Heart left ventricle (tissue), 16 donors: ENCODE measurements at regions of chr19 and their contacts with region 1.

Region 1: GRCh38 chr19:3665681-3666544 is 34.4 kb downstream of the PIP5K1C start:
- DNase-seq: peak; percentile 65 to 89 (median 69)
- ATAC-seq: peak in 3 of 4 donors; percentile 29 to 58 (median 38)
- H3K4me3 ChIP-seq: no peak overlapping the region
- H3K27ac ChIP-seq: peak overlapping the region in 3 of 12 donors; percentile 1 to 51 (median 42)
- H3K4me1 ChIP-seq: peaks cover 0 to 54% (median 36%) of the 10 kb centered on the region in 12 donors
- H3K27me3 ChIP-seq: no peaks in the 10 kb centered on the region
- CTCF ChIP-seq: peak; percentile 82 to 98 (median 96)
- POLR2A ChIP-seq: no peak

Region 2: GRCh38 chr19:3700221-3701032 is 34.5 kb after region 1 on chr19 and contains the start of gene PIP5K1C:
- intact Hi-C with region 1: loop called (anchors 1 to 2 kb)
- DNase-seq: peak; percentile 88 to 95 (median 92)
- ATAC-seq: peak; percentile 48 to 94 (median 89)
- H3K4me3 ChIP-seq: peak within 1 kb of the TSS; percentile 69 to 100 (median 90)
- H3K27ac ChIP-seq: peak within 1 kb of the TSS; percentile 62 to 97 (median 90)
- H3K4me1 ChIP-seq: peaks cover 0 to 30% (median 12%) of the 10 kb centered on the region in 12 donors
- H3K27me3 ChIP-seq: no peaks in the 10 kb centered on the region
- CTCF ChIP-seq: peak; percentile 63 to 91 (median 78)
- POLR2A ChIP-seq: peak in 1 of 2 donors; percentile 41
- total RNA-seq, gene PIP5K1C: 27.8 to 56.6 (median 38.2) TPM

Region 3: GRCh38 chr19:3798137-3798536 is 132.2 kb after region 1 on chr19:
- intact Hi-C with region 1: no loop called
- DNase-seq: no peak
- ATAC-seq: no peak
- H3K4me3 ChIP-seq: no peak overlapping the region
- H3K27ac ChIP-seq: no peak overlapping the region
- H3K4me1 ChIP-seq: peaks cover 0 to 14% (median 7%) of the 10 kb centered on the region in 12 donors
- H3K27me3 ChIP-seq: peaks cover 0 to 46% (median 24%) of the 10 kb centered on the region in 9 donors
- CTCF ChIP-seq: no peak
- POLR2A ChIP-seq: no peak

Region 4: GRCh38 chr19:3821857-3822364 is 156.0 kb after region 1 on chr19:
- intact Hi-C with region 1: loop called in 2 of 10 experiments (anchors 10 kb)
- DNase-seq: peak; percentile 44 to 89 (median 62)
- ATAC-seq: peak in 3 of 4 donors; percentile 61 to 85 (median 80)
- H3K4me3 ChIP-seq: no peak overlapping the region
- H3K27ac ChIP-seq: no peak overlapping the region
- H3K4me1 ChIP-seq: peaks cover 0 to 15% (median 3%) of the 10 kb centered on the region in 12 donors
- H3K27me3 ChIP-seq: peaks cover 0 to 4% (median 0%) of the 10 kb centered on the region in 9 donors
- CTCF ChIP-seq: peak; percentile 94 to 100 (median 98)
- POLR2A ChIP-seq: no peak

Region 5: GRCh38 chr19:4199699-4200293 is 533.9 kb after region 1 on chr19:
- intact Hi-C with region 1: loop called in 6 of 10 experiments (anchors 5 to 10 kb)
- DNase-seq: no peak
- ATAC-seq: no peak
- H3K4me3 ChIP-seq: no peak overlapping the region
- H3K27ac ChIP-seq: no peak overlapping the region
- H3K4me1 ChIP-seq: peaks cover 0 to 11% (median 0%) of the 10 kb centered on the region in 12 donors
- H3K27me3 ChIP-seq: peaks cover 22 to 54% (median 44%) of the 10 kb centered on the region in 9 donors
- CTCF ChIP-seq: no peak
- POLR2A ChIP-seq: no peak

Region 6: DNA sequence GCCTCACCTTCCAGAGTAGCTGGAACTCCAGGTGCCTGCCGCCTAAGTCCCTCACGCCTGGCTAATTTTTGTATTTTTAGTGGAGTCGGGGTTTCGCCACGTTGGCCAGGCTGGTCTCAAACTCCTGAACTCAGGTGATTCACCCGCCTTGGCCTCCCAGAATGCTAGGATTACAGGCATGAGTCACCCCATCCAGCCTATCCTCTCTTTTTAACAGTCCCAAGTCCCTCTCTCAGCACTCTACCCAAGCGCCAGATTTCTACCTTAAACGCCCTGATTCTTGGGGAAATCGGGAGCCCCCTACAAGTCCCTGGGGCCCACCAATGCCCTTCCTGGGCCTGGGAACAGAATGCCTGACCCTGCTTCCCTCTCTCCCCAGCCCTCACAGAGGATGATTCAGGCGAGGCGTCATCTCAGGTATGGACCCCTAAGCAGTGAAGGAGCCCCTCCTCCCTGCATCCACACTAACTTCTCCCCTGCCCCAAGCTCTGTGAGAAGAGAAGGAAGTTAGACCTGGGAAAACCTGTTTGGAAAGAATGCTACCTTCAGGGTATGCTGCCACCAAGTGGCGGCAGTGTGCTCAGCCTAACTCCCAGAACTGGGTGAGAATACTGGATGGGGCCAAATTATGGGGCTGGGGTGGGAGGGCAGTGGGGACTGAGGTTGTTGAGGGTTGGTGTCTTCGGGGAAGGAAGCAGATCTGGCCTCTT is 542.6 kb after region 1 on chr19:
- intact Hi-C with region 1: loop called in 6 of 10 experiments (anchors 5 to 10 kb)
- DNase-seq: no peak
- ATAC-seq: no peak
- H3K4me3 ChIP-seq: no peak overlapping the region
- H3K27ac ChIP-seq: no peak overlapping the region
- H3K4me1 ChIP-seq: peaks cover 0 to 8% (median 0%) of the 10 kb centered on the region in 12 donors
- H3K27me3 ChIP-seq: peaks cover 0 to 11% (median 0%) of the 10 kb centered on the region in 9 donors
- CTCF ChIP-seq: peak in 7 of 12 donors; percentile 4 to 39 (median 19)
- POLR2A ChIP-seq: no peak